Endothelial cell of umbilical vein (primary cell): ENCODE measurements at regions of chr3 and their contacts with region 1.

Region 1: DNA sequence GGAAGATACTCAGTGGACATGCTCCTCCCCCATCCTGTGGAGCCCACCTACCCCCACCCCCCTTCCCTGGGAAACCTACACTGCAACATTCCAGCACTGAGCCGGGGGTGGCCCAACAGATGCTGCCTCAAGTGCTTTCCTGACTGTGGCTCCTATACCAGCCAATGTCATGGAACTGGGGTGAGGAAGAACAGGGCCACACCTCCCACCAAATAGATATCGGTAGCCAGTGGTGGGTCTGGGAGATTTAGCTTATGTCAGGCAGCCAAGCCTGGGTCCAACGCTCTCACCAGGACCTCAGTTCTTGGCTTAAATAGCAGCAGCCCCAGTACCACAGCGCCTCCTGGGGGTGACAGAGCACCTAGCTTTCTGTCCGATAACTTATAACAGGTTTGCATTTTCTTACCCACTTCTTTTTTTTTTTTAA is 30.3 kb downstream of the CDC25A start:
- DNase-seq: peak; percentile 72
- H3K4me3 ChIP-seq: no peak overlapping the region
- H3K27ac ChIP-seq: no peak overlapping the region
- H3K4me1 ChIP-seq: peaks cover 13% of the 10 kb centered on the region
- H3K27me3 ChIP-seq: no peaks in the 10 kb centered on the region
- CTCF ChIP-seq: peak; percentile 72 to 81
- POLR2A ChIP-seq: no peak

Region 2: GRCh38 chr3:47601281-47601680 is 556.7 kb before region 1 on chr3:
- CTCF ChIA-PET with region 1: no interaction called
- POLR2A ChIA-PET with region 1: interaction called, 10 read pairs
- dilution Hi-C with region 1: no loop called
- intact Hi-C with region 1: no loop called
- DNase-seq: no peak
- H3K4me3 ChIP-seq: no peak overlapping the region
- H3K27ac ChIP-seq: no peak overlapping the region
- H3K4me1 ChIP-seq: peaks cover 3% of the 10 kb centered on the region
- H3K27me3 ChIP-seq: no peaks in the 10 kb centered on the region
- CTCF ChIP-seq: no peak
- POLR2A ChIP-seq: no peak

Region 3: GRCh38 chr3:47836986-47837385 is 321.0 kb before region 1 on chr3:
- CTCF ChIA-PET with region 1: interaction called, 129 read pairs
- POLR2A ChIA-PET with region 1: interaction called, 5 read pairs
- dilution Hi-C with region 1: no loop called
- intact Hi-C with region 1: loop called (anchors 1 kb)
- DNase-seq: no peak
- H3K4me3 ChIP-seq: no peak overlapping the region
- H3K27ac ChIP-seq: no peak overlapping the region
- H3K4me1 ChIP-seq: no peaks in the 10 kb centered on the region
- H3K27me3 ChIP-seq: no peaks in the 10 kb centered on the region
- CTCF ChIP-seq: no peak
- POLR2A ChIP-seq: no peak

Region 4: DNA sequence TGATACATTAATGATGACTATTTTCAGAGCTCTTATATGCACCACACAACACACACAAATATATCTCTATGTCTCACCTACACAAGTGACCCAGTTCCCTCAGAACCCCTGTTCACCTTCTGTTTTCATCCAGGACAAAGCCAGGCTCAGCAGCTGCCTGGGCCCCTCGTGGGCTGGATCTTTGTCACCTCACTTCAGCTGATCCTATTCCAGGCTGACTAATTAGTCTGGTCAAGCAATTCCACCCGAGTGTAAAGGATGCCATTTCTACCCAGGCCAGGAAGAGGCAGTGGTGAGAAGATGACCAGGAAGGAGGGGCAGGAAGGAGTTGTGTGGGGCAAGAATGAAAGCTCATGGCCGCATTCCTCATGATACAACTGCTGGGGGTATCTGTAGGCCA is 292.8 kb before region 1 on chr3:
- CTCF ChIA-PET with region 1: interaction called, 10 read pairs
- POLR2A ChIA-PET with region 1: no interaction called
- dilution Hi-C with region 1: no loop called
- intact Hi-C with region 1: no loop called
- DNase-seq: no peak
- H3K4me3 ChIP-seq: no peak overlapping the region
- H3K27ac ChIP-seq: no peak overlapping the region
- H3K4me1 ChIP-seq: no peaks in the 10 kb centered on the region
- H3K27me3 ChIP-seq: no peaks in the 10 kb centered on the region
- CTCF ChIP-seq: no peak
- POLR2A ChIP-seq: no peak

Region 5: GRCh38 chr3:47989981-47990440 is 168.0 kb before region 1 on chr3:
- CTCF ChIA-PET with region 1: interaction called, 44 read pairs
- POLR2A ChIA-PET with region 1: no interaction called
- dilution Hi-C with region 1: no loop called
- intact Hi-C with region 1: no loop called
- DNase-seq: peak; percentile 85
- H3K4me3 ChIP-seq: no peak overlapping the region
- H3K27ac ChIP-seq: no peak overlapping the region
- H3K4me1 ChIP-seq: peaks cover 13% of the 10 kb centered on the region
- H3K27me3 ChIP-seq: no peaks in the 10 kb centered on the region
- CTCF ChIP-seq: peak; percentile 73 to 87
- POLR2A ChIP-seq: no peak

Region 6: DNA sequence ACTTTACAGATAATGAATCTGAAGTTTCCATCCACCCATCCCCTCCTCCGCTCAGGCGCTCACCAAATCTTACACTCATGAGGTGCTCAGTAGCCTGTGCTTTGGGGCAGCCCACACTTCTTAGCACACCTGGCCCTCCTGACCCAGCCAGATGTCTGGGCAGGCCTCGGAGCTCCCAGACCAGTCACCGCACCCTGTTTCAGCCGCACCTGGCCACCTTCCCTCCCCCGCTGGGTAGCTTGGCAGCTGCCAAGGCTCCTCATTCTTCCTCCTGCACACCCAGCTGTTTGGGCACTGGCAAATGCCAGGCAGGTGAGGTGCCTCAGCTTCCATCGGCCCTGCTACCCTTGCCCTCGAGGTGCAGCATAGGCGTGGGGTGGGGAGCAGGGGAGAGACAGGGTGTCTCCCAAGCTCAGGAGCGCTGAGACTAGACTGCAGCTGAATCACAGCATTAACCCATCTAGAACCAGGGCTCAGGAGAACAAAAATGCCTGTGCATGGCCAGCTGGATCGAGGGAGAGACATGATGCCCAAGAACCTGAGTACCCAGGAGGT is 15.6 kb before region 1 on chr3:
- CTCF ChIA-PET with region 1: interaction called, 15 read pairs
- POLR2A ChIA-PET with region 1: interaction called, 12 read pairs
- dilution Hi-C with region 1: no loop called
- intact Hi-C with region 1: no loop called
- DNase-seq: no peak
- H3K4me3 ChIP-seq: no peak overlapping the region
- H3K27ac ChIP-seq: no peak overlapping the region
- H3K4me1 ChIP-seq: peaks cover 9% of the 10 kb centered on the region
- H3K27me3 ChIP-seq: no peaks in the 10 kb centered on the region
- CTCF ChIP-seq: no peak
- POLR2A ChIP-seq: no peak

Region 7: DNA sequence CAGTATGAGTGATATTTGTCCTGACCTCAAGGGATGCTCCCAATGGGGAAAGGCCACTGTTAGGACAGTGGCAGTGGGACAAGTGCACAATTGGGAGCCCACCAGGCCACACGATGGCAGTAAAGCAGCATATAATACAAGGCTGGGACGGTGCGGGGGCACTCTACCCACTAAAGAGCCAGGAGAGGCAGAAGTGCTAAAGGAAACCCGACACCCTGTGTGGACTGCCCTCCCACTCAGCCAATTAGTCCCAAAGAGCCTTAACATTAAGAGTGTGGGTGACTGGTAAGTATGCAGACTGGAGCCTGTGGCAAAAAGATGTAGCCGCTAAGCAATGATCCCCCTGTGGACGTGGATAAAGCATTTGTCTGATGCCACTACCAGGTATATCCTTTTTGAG is 74.8 kb after region 1 on chr3:
- CTCF ChIA-PET with region 1: no interaction called
- POLR2A ChIA-PET with region 1: no interaction called
- dilution Hi-C with region 1: no loop called
- intact Hi-C with region 1: no loop called
- DNase-seq: peak; percentile 69
- H3K4me3 ChIP-seq: no peak overlapping the region
- H3K27ac ChIP-seq: no peak overlapping the region
- H3K4me1 ChIP-seq: peaks cover 3% of the 10 kb centered on the region
- H3K27me3 ChIP-seq: no peaks in the 10 kb centered on the region
- CTCF ChIP-seq: peak; percentile 63 to 64
- POLR2A ChIP-seq: no peak